ENCODE measurements at regions of chr6 and their contacts with region 1.

Region 1: DNA sequence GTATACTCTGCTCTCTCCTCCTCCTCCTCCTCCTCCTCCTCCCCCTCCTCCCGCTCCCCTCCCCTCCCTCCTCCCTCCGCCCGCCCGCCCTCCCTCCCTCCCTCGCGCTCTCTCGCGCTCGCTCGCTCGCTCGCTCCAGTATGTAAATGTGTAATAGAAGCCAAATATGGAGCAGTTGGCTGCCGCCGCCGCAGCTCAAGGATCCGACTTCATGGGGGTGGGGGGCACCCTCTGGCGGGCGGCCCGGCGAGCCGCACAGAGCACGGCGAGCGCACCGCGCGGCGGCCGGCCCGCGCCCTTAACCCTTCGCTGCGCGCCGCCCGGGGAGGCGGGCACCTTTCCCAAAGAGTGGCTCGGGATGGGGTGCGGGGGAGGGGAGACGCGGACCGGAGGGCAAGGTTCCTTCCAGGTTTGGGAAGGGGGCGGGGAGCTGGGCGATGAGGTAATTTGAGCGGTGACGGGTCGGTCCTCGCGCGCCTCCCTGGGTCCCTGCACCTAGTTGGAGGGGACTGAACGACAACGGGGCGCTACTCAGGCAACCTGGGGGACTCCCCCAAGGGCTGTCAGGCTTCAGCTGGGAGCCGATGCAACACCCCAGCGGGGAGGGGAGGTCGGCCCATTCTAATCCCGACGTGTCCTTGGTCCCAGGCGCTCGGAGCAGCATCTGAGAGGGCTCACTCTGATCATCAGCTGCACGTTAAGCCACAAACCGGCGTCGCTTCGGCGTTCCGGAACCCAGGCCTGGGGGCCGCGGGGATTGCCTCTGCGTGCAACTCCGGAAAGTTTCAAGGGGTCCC is 409 bp upstream of the ATXN1 start:
- DNase-seq: peak; percentile 94

Region 2: GRCh38 chr6:16238057-16238962 is 523.4 kb before region 1 on chr6 and contains the start of gene GMPR:
- intact Hi-C with region 1: loop called (anchors 10 kb)
- DNase-seq: peak; percentile 93
- total RNA-seq, gene GMPR: 71.0 TPM

Region 3: DNA sequence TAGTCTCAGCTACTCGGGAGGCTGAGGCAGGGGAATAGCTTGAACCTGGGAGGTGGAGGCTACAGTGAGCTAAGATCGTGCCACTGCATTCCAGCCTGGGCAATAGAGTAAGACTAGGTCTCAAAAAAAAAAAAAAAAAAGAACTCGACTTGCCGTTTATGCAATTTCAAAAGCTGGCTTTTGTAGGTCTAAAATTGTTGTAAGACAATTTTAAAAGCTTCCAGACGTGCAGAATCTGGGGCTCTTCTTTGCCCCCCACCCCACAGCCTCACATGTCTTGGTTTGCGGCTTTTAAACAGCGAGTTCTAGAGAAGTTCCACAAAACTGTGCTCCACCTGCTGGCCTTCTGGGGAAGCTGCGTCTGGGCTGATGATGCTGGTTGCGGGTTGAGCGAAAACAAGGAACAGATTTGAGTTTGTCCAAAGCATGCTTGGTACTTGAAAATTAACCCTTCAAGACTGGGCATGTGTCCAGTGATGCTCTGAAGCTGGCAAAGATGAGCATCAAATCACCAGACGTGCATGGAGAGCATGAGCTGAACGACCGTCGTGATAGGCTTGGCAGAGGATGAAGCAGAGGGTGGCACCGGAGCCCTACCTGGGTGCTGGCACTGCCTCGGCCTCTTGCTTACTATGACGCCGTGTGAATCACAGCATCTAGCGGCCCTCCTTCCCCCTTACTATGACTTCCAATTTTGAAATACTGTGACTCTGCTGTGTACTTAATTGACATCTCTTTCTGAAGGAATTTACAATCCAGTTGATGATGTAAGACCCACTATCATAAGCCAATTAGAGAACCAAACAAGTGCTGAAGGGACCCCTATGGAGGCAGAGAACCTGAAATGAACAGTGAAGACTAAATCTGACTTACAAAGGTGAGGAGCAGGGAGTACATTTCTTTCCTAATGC is 351.9 kb before region 1 on chr6:
- intact Hi-C with region 1: loop called (anchors 10 kb)
- DNase-seq: peak; percentile 85

Region 4: GRCh38 chr6:16540804-16541752 is 220.6 kb before region 1 on chr6:
- intact Hi-C with region 1: loop called (anchors 5 kb)
- DNase-seq: no peak

Region 5: GRCh38 chr6:16803294-16804200 is 41.9 kb after region 1 on chr6:
- intact Hi-C with region 1: no loop called
- DNase-seq: peak; percentile 79

Region 6: DNA sequence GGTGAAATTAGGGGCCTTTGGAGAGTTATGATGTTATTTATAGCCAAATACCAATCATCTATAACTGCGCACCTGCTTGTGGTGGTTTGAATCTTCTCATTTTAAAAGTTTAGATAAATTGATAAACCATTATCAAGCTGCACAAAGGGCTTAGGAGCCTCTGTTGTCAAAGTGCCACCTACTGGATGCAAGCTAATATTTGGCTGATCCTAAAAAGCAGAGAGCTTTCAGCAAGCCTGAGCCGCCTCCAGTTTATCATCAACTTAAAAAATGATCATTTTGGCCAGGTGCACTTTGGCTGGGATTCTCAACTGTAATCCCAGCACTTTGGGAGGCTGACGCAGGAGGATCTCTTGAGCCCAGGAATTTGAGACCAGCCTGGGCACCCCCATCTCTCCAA is 58.1 kb after region 1 on chr6:
- intact Hi-C with region 1: no loop called
- DNase-seq: no peak

Region 7: DNA sequence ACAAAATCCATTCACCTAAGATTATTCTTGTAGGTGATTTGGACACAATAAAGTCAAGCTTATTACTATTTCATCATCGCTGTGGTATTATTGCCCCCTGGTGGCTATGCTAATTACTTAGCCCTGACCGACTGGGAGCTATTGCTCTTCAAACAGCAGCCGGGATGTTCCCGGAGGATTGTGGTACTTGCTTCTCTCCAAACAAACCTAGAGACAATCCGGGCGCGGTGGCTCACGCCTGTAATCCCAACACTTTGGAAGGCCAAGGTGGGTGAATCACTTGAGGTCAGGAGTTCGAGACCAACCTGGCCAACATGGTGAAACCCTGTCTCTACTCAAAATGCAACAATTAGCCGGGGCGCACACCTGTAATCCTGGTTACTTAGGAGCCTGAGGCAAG is 324.8 kb after region 1 on chr6:
- intact Hi-C with region 1: loop called (anchors 2 kb)
- DNase-seq: no peak

Measured in cardiac septum (tissue), 1 donor.